Lower leg skin (tissue), 4 donors: ENCODE measurements at regions of chr11 and their contacts with region 1.

Region 1: GRCh38 chr11:112401036-112401769 is 140.5 kb upstream of the PLET1 start:
- DNase-seq: no peak
- H3K4me3 ChIP-seq: no peak overlapping the region
- CTCF ChIP-seq: no peak
- POLR2A ChIP-seq: no peak

Region 2: DNA sequence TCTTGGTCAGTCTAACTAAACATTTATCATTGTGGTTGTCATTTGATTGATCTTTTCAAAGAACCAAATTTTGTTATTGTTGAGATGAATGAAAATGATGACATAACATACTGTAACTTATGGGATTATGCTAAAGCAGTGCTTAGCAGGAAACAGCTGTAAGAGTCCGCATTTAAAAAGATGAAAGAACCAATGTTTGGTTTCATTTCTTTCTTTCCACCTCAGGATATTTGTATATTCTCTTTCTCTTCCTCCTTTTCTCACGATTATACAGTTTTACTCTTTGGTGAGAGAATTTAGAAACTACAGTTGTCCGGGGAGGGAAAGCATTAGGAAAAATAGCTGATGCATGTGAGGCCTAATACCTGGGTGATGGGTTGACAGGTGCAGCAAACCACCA is 350.5 kb before region 1 on chr11:
- intact Hi-C with region 1: no loop called
- DNase-seq: no peak
- H3K4me3 ChIP-seq: no peak overlapping the region
- CTCF ChIP-seq: no peak
- POLR2A ChIP-seq: no peak

Region 3: GRCh38 chr11:112440518-112440917 is 39.3 kb after region 1 on chr11:
- intact Hi-C with region 1: no loop called
- DNase-seq: no peak
- H3K4me3 ChIP-seq: no peak overlapping the region
- CTCF ChIP-seq: no peak
- POLR2A ChIP-seq: no peak

Region 4: GRCh38 chr11:113675003-113675561 is 1273.9 kb after region 1 on chr11:
- intact Hi-C with region 1: loop called (anchors 5 kb)
- DNase-seq: no peak
- H3K4me3 ChIP-seq: no peak overlapping the region
- CTCF ChIP-seq: no peak
- POLR2A ChIP-seq: no peak